ENCODE measurements at regions of chr15 and their contacts with region 1.

Region 1: GRCh38 chr15:51162865-51163762 is 68.4 kb upstream of the TNFAIP8L3 start:
- DNase-seq: peak; percentile 82
- CTCF ChIP-seq: peak; percentile 84

Region 2: GRCh38 chr15:51270706-51271105 is 107.6 kb after region 1 on chr15:
- in situ Hi-C with region 1: loop called (anchors 10 kb)
- DNase-seq: no peak
- CTCF ChIP-seq: no peak